ENCODE measurements at regions of chr15 and their contacts with region 1.

Region 1: DNA sequence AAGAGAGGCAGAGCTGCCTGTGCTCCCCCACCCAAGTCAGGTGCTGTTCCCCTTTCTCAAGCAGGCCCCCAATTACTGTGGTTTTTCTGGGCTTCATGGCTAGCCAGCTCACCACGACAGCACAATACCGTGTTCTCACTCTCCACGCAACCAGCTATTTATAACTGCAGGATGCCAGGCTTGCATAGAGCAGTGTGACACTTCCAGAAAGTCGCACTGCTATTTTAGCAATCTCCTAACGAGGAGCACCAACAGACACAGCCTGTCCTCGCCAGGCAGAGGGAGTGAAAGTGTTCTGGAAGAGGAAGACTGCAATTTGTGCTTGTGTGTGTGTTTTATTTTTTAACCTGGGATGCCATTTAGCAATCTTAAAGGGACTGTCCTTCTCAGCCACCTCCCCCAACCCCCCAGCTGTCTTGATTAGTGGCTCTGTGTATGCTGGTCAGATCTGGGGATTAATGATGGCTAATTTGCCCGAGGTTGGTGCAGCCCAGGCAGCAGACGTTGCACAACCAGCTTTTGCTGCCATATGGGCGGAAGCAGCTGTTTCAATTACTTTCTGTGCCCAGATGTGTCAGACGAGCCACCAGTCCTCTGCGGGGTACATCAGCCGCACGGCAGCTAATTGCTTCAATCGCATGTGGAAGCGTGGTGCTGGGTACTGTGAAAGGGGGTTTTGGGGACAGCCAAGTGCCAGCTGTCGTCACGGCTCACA is 268.0 kb upstream of the ARRDC4 start:
- DNase-seq: no peak

Region 2: DNA sequence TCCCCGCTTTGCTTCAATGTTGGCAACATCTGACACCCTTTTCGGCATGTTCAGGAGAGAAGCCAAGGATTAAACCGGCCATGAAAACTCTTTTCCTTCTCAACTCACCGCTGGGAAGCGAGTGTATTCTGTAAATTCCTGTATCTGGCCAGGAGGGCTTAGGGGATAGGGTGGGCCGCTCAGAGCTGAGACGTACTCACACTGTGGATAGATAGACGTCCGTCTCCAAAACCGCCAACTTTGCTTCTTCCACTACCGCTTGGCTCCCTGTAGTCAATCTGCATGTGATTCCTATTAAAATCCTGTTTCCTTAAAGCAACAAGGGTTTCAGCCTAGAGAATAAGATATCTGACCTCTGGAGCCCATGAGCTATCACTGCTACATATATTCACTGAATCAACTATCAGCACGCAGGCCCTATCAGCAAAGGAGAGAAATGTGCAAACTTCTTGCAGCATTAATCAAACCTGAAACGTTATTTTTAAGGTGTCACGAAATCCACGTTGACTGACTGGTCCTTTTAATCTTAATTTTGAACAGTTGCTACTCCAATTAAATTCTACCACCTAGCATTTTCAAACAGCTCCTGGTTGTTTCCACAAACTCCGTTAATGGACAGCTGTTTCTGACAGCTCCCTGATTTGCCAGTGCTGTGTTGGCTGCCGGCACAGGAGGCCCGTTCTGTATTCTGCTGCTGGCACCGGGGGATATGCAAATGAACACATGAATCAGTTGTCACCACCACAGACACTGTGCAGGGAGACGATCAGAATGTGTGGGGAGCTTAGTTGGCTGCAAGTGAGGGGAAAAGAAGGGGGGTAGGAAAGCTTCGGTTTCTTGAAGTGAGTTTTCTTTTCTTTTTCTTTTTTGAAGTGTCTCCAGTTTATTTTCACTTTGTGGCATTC is 170.8 kb before region 1 on chr15:
- intact Hi-C with region 1: loop called (anchors 5 kb)
- DNase-seq: peak; percentile 83

Measured in cardiac septum (tissue), 1 donor.